ENCODE measurements at regions of chr2 and their contacts with region 1.

Region 1: DNA sequence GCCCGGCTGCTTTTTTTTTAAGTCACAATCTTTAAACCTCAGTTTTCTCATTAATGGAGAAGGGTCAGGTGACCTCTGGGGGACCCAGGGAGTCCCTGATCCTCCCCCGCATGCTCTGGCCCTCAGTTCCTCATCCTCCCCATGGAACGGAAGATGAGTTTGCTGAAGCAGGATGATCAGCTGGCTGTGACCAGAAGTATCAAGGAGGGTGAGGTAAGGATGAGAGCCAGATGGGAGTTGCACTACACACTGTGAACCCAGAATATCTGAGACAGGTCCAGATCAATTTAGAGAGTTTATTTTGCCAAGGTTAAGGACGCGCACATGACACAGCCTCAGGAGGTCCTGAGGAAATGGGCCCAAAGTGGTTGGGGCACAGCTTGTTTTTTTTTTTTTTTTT is 3.8 kb downstream of the CATIP start:
- DNase-seq: no peak
- H3K4me3 ChIP-seq: no peak overlapping the region
- CTCF ChIP-seq: no peak

Region 2: DNA sequence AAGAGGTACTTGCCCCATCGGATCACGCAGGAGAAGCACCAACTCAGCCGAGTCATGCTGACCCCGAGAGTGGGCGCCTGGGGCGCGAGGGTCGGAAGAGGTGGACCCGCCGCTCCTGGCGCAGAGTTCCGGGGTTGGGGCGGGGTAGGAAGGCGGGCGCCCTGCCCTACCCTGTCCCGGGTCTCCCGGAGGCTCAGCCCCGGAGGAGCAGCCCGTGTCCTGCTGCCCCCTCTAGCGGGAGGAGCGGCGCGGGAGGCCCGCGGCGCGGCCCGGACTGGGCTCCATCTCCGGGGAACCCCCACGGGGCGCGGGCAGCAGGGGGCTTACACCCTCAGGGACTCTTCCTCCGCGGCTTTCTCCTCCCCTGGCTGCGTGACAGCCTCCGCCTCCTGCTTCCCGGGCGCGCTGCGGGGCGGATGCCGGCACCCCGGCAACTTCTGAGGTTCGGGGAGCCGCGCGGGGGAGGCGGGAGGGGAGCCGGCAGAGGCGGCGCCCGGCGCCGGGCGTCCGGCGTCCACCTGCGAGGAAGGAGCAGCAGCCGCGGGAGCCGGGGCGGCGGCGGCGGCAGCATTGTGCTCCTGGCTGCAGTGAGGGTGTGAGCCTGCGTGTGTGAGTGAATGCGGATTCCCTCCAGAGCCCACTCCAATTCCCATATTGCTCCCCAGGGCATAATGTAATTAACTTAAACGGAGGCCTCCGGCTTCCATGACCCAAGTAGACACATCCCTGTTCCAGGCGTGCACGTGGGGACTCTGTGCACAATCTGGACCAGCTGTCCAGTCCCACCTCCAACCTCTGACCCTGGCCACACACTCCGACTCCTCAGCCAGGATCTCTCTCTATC is 350.1 kb before region 1 on chr2:
- CTCF ChIA-PET with region 1: no interaction called
- POLR2A ChIA-PET with region 1: no interaction called
- DNase-seq: no peak
- H3K4me3 ChIP-seq: peak overlapping the region; percentile 74
- CTCF ChIP-seq: peak; percentile 82

Region 3: GRCh38 chr2:218269899-218270720 is 90.3 kb before region 1 on chr2 and contains the starts of genes AAMP and PNKD:
- CTCF ChIA-PET with region 1: interaction called, 51 read pairs
- POLR2A ChIA-PET with region 1: no interaction called
- DNase-seq: peak; percentile 94
- H3K4me3 ChIP-seq: peak within 1 kb of the TSS; percentile 97
- CTCF ChIP-seq: peak; percentile 18

Region 4: GRCh38 chr2:218292048-218293014 is 68.1 kb before region 1 on chr2 and contains the start of gene TMBIM1:
- CTCF ChIA-PET with region 1: interaction called, 117 read pairs
- POLR2A ChIA-PET with region 1: no interaction called
- DNase-seq: no peak
- H3K4me3 ChIP-seq: peak within 1 kb of the TSS; percentile 85
- CTCF ChIP-seq: peak; percentile 64

Region 5: GRCh38 chr2:218312267-218312756 is 48.1 kb before region 1 on chr2:
- CTCF ChIA-PET with region 1: interaction called, 37 read pairs
- POLR2A ChIA-PET with region 1: no interaction called
- DNase-seq: no peak
- H3K4me3 ChIP-seq: no peak overlapping the region
- CTCF ChIP-seq: no peak

Region 6: GRCh38 chr2:218332920-218333645 is 27.4 kb before region 1 on chr2:
- CTCF ChIA-PET with region 1: interaction called, 22 read pairs
- POLR2A ChIA-PET with region 1: no interaction called
- DNase-seq: no peak
- H3K4me3 ChIP-seq: no peak overlapping the region
- CTCF ChIP-seq: no peak

Region 7: DNA sequence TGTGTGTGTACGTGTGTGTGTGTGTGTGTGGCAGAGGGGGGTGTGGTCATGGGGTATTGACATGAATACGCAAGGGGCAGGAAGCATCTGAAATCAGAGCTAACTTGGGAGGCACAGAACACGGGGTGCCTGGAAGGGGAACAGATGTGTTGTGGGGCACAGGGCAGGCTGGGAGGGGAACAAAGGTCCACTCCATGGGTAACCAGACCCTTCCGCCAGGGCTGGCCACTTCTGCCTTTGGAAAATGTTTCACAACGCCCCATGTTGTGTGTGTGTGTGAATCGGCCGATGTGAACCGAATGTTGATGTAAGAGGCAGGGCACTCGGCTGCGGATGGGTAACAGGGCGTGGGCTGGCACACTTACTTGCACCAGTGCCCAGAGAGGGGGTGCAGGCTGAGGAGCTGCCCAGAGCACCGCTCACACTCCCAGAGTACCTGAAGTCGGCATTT is 21.5 kb after region 1 on chr2 and contains the start of gene SLC11A1:
- CTCF ChIA-PET with region 1: interaction called, 13 read pairs
- POLR2A ChIA-PET with region 1: no interaction called
- DNase-seq: no peak
- H3K4me3 ChIP-seq: no peak within 1 kb of the TSS
- CTCF ChIP-seq: no peak